ENCODE measurements at regions of chr9 and their contacts with region 1.

Region 1: DNA sequence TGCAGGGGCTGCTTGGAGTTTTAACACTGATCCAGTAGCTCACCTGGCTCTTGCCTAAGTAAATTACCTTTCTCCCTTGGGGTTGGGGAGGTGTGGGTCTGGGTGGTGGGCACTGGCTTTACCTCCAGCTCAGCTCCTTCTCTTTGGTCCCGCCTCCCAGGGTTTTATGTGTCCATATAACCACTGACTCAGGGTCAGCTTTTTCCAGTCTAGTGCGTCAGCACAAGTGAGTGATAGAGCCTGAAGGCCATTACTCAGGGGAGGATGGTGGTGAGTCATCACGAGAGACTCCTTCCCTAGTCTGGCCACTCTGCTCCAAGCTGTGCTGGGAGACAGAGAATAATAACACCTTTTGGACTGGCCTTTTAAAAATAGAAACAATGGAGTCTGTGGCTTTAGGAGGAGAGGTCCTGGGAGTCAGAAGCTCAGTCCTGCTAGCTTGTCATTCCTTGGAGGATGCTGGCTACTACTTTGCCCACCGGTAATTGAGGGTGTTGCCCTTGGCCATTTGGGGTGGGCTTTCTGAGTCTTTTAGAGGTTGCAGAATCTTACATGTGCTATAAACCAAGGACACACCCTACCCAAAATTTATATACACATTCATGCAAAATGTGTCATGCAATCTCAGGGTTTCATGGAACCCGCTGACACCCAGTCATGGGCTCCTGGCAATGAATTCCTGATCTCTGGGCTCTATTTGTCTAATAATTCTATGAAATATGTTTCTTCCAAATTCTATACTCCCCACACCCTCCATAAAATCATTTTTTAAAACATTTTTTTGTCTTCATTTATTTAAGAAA is 35.5 kb upstream of the ATP6V1G1 start:
- DNase-seq: peak; percentile 90
- H3K4me3 ChIP-seq: no peak overlapping the region
- CTCF ChIP-seq: no peak

Region 2: DNA sequence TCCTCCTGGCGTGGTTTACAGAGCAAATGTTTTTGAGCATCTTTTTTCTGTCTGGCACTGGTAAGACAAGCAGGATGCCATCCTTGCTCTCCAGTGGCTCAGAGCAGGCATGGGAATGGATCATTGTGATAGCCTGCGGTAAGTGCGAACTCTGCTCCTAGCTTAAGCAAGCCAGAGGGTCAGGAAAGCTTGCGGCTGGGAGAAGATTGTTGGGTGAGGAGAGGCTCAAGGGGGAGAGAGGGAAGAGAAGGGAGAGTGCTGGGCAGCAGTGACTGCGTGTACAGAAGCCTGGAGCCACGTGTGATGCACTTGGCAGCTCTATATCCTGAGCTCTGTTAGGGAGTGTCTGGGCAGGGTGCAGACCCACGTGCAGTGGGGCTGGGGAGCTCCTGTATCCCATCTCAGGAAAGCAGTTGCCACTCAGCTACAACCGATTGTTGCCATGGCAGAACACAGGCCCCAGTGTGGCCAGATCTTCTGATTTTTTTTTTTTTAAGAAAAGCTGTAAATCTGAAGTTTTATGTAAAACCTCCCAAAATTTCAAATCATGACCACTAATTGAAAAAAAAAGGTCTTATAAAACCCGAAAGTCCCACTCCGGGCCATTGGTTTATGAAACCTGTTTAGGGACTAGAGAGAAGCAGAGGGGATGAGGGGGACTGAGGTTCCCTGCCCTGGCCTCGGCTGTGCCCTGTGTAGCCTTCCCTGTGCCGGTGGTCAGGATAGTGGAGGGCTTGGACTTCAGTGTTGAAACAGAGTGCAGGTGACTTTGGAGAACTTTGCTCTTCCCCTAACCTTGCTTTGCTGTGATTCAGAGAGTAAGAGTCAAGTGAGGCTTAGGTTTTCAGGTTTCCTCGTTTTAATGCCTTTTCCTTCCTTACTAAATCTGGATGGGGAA is 608.7 kb before region 1 on chr9:
- CTCF ChIA-PET with region 1: no interaction called
- POLR2A ChIA-PET with region 1: no interaction called
- DNase-seq: no peak
- H3K4me3 ChIP-seq: no peak overlapping the region
- CTCF ChIP-seq: no peak

Region 3: DNA sequence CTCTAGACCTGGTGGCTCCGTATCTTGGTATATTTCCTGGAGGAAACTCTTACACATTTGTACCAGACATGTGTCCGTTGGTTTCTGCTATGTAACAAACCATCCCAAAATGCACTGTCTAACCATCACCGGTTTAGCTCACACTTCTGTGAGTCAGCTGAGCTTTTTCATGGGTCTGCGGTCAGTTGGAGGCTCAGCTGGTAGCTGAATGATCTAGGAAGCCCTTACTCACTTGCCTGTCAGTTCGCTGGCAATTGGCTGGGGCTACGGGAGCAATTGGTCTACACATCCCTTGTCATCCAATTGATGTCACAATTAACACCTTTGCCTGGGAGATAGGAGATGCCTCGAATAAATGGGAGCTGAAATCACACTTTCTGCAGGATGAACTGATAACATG is 35.2 kb before region 1 on chr9:
- CTCF ChIA-PET with region 1: no interaction called
- POLR2A ChIA-PET with region 1: no interaction called
- DNase-seq: no peak
- H3K4me3 ChIP-seq: no peak overlapping the region
- CTCF ChIP-seq: no peak

Region 4: DNA sequence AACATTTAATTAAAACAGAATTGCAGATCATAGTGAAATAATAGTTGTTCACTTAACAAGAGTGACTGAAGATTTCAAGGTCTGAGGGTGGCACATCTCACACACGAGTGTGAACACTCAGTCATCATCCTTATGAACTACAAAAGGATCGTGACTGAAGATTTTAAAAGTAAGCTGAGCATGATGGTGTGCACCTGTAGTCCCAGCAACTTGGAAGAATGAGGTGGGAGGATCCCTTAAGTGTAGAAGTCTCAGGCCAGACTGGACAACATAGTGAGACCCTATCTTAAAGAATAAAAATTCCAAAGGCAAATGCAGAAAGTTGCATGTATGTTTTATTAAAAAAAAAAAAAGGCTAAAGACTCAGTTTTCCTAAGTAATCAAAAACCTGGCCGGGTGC is 13.1 kb after region 1 on chr9:
- CTCF ChIA-PET with region 1: no interaction called
- POLR2A ChIA-PET with region 1: no interaction called
- DNase-seq: no peak
- H3K4me3 ChIP-seq: no peak overlapping the region
- CTCF ChIP-seq: no peak

Region 5: DNA sequence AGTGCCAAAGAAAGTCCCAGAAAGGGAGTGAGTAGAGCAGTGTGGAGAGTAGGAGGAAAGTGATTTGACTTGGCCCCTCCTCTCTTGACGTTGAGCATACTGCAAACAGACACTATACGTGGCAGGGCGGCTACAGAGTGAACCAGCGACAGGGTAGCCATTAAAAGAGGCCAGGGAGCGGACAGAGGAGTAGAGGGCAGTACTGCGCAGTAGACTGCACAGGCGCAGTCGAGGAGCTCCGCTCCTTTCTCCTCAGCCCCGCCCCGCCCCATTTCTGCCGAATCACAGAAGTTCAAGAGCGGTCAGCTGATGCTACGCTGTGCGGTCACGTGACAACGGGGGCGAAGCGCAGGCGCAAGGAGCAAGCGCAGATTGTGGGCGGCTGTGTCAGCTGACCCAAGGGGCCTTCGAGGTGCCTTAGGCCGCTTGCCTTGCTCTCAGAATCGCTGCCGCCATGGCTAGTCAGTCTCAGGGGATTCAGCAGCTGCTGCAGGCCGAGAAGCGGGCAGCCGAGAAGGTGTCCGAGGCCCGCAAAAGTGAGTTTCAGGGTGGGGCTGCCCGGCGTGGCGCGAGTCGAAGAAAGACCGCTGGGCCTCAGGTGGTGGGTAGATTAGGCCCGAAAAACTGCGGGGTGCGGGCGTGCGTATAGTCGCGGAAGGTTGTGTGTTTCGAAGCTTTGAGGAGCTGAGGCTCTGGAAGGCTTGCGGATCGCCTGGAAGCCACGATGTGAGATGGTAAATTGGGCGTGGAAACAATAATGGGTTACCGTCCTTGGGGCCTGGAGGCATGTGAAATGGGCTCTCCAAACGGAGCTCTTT is 35.5 kb after region 1 on chr9 and contains the start of gene ATP6V1G1:
- CTCF ChIA-PET with region 1: interaction called, 4 read pairs
- POLR2A ChIA-PET with region 1: interaction called, 16 read pairs
- DNase-seq: peak; percentile 94
- H3K4me3 ChIP-seq: peak within 1 kb of the TSS; percentile 99
- CTCF ChIP-seq: peak; percentile 29

Region 6: GRCh38 chr9:114869845-114870244 is 317.8 kb after region 1 on chr9:
- CTCF ChIA-PET with region 1: no interaction called
- POLR2A ChIA-PET with region 1: no interaction called
- DNase-seq: no peak
- H3K4me3 ChIP-seq: no peak overlapping the region
- CTCF ChIP-seq: no peak

Measured in AG04449 (cell line).